Natural killer cell (primary cell): ENCODE measurements at regions of chr11 and their contacts with region 1.

Region 1: DNA sequence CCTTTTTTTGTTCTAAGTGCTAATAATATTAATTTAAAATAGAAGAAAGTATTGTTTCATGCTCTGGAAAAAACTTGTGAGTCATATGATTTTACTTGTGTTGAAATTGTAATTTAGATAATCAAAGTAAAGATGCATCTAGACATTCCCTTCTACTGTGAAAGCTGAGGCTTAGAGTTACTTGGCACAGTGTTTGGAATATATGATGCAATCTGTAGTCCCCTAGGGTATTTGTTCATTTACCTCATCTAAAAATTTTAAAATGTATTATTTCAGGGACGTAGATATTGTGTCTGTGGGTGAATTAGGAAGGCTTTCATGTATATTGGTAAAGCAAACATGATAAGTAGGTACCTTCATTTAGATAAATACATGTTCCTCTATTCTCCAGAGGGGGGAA is 793.5 kb upstream of the CNTN5 start:
- DNase-seq: no peak
- ATAC-seq: no peak
- H3K4me3 ChIP-seq: no peak overlapping the region
- H3K4me3 Mint-ChIP-seq: no peak overlapping the region
- H3K27ac ChIP-seq: no peak overlapping the region
- H3K27ac Mint-ChIP-seq: no peak overlapping the region
- H3K4me1 ChIP-seq: no peaks in the 10 kb centered on the region
- H3K4me1 Mint-ChIP-seq: no peaks in the 10 kb centered on the region
- H3K27me3 ChIP-seq: no peaks in the 10 kb centered on the region
- H3K27me3 Mint-ChIP-seq: no peaks in the 10 kb centered on the region
- CTCF ChIP-seq: no peak

Region 2: GRCh38 chr11:98099371-98099770 is 127.9 kb before region 1 on chr11:
- intact Hi-C with region 1: no loop called
- DNase-seq: no peak
- ATAC-seq: no peak
- H3K4me3 ChIP-seq: no peak overlapping the region
- H3K4me3 Mint-ChIP-seq: no peak overlapping the region
- H3K27ac ChIP-seq: no peak overlapping the region
- H3K27ac Mint-ChIP-seq: no peak overlapping the region
- H3K4me1 ChIP-seq: no peaks in the 10 kb centered on the region
- H3K4me1 Mint-ChIP-seq: no peaks in the 10 kb centered on the region
- H3K27me3 ChIP-seq: no peaks in the 10 kb centered on the region
- H3K27me3 Mint-ChIP-seq: no peaks in the 10 kb centered on the region
- CTCF ChIP-seq: no peak

Region 3: GRCh38 chr11:98136357-98136756 is 90.9 kb before region 1 on chr11:
- intact Hi-C with region 1: no loop called
- DNase-seq: no peak
- ATAC-seq: no peak
- H3K4me3 ChIP-seq: no peak overlapping the region
- H3K4me3 Mint-ChIP-seq: no peak overlapping the region
- H3K27ac ChIP-seq: no peak overlapping the region
- H3K27ac Mint-ChIP-seq: no peak overlapping the region
- H3K4me1 ChIP-seq: no peaks in the 10 kb centered on the region
- H3K4me1 Mint-ChIP-seq: no peaks in the 10 kb centered on the region
- H3K27me3 ChIP-seq: no peaks in the 10 kb centered on the region
- H3K27me3 Mint-ChIP-seq: no peaks in the 10 kb centered on the region
- CTCF ChIP-seq: no peak

Region 4: DNA sequence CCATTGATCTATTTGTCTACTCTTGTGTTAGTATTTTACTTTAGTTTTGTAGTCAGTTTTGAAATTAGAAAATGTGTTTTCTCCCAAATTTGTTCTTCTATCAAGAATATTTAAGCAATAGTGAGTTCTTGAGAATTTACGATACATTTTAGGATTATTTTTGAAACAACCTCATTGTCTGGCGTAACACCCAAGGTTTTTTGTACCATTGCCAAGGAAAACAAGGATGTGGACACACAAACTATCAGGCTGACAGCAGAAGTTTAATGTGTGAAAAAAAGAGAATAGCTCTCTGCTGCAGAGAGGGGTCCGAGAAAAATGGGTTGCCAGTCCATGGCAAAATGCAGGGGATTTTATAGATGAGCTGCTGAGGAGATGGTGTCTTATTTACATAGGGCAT is 71.6 kb before region 1 on chr11:
- intact Hi-C with region 1: loop called (anchors 10 kb)
- DNase-seq: no peak
- ATAC-seq: no peak
- H3K4me3 ChIP-seq: no peak overlapping the region
- H3K4me3 Mint-ChIP-seq: no peak overlapping the region
- H3K27ac ChIP-seq: no peak overlapping the region
- H3K27ac Mint-ChIP-seq: no peak overlapping the region
- H3K4me1 ChIP-seq: no peaks in the 10 kb centered on the region
- H3K4me1 Mint-ChIP-seq: no peaks in the 10 kb centered on the region
- H3K27me3 ChIP-seq: no peaks in the 10 kb centered on the region
- H3K27me3 Mint-ChIP-seq: no peaks in the 10 kb centered on the region
- CTCF ChIP-seq: no peak

Region 5: DNA sequence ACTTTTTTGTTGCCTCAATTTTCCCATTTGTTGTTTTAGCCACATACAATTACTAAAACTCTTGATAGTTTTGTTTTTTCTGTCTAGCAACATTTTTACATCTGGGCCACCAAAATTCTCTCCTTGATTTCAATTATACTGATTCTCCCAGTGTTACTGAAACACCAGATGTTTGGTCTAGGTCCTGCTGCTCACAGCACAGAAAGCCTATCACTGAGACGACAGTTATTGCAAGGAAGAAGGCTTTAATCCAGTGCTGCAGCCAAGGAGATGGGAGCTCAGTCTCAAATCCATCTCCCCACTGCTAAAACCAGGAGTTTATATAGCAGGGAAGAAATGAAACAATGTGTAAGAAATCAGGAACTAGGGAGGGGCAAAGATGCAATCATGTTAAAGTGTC is 44.2 kb before region 1 on chr11:
- intact Hi-C with region 1: no loop called
- DNase-seq: no peak
- ATAC-seq: no peak
- H3K4me3 ChIP-seq: no peak overlapping the region
- H3K4me3 Mint-ChIP-seq: no peak overlapping the region
- H3K27ac ChIP-seq: no peak overlapping the region
- H3K27ac Mint-ChIP-seq: no peak overlapping the region
- H3K4me1 ChIP-seq: no peaks in the 10 kb centered on the region
- H3K4me1 Mint-ChIP-seq: no peaks in the 10 kb centered on the region
- H3K27me3 ChIP-seq: no peaks in the 10 kb centered on the region
- H3K27me3 Mint-ChIP-seq: no peaks in the 10 kb centered on the region
- CTCF ChIP-seq: no peak